GM13976 (cell line): ENCODE measurements at regions of chr2 and their contacts with region 1.

Region 1: DNA sequence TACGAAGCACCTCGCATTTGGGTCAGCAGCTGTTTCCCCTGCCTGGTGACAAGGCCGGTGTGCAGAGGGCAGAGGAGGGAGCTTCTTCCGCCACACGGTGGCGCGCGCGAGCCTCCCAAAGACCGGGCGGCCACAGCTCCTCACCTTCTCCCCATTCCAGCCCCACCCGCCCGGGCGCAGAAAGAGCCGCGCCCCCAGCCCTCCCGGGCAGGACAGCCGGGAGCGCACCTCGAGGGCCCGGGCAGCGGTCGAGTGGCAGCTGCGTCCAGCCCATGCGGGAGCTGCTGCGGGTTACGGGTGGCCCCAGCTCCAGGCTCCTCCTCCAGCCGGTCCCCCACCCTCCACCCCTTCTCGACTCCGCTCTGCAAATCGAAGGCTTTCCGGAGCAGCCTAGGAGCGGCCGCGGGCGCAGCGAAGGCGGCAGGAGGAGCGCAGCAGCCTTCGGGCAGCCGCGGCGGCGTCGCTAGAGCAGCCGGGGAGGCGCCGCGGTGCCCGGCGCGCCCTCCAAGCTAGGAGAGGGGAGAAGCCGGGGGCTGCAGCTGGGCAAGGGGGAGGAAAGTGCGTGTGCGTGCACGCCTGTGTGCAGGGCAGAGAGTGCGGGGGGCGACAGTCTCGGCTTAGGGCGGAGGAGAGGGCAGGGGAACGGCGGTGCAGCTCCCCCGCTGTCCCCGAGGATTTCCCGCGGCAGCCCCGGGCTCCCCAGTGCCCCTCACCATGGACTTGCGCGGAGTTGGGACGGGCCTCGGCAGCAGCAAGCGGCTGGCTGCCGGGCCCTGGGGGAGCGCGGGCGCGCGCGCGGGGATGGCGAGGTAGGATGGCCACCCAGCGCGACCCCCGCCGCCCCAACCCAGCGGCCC is at the start of gene CCDC85A:
- DNase-seq: peak; percentile 88
- CTCF ChIP-seq: peak; percentile 88

Region 2: DNA sequence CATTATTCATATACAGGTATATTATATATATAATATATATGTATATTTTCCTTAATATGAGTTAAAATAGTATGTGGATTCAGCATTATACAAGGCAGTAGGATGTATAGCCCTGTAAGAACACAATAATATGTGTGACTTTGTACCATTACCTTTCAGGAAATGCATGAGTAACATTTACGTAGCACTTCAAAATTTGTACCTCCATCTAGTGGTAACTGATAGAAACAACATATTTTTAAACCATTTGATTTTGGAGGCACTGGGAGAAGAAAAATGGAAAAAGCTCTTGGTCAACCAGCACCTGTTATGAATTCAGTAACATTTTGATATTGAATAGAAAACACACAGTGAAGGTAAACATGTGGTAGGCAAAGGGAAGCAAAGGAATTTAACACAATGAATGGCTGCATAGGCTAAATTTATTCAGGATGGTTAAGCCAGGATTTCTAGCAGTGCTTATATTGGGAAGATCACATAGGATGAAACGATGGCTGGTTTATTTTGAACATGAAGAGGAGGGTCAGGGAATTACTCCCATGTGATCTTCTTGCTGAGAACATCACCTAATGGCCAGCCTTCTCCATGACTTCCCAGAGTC is 565.4 kb after region 1 on chr2:
- in situ Hi-C with region 1: loop called (anchors 10 kb)
- DNase-seq: peak; percentile 1
- CTCF ChIP-seq: no peak

Region 3: GRCh38 chr2:57516698-57517340 is 1332.9 kb after region 1 on chr2:
- in situ Hi-C with region 1: loop called (anchors 25 kb)
- DNase-seq: peak; percentile 38
- CTCF ChIP-seq: peak; percentile 21